Left cardiac atrium (tissue), 4 donors: ENCODE measurements at regions of chr6 and their contacts with region 1.

Region 1: DNA sequence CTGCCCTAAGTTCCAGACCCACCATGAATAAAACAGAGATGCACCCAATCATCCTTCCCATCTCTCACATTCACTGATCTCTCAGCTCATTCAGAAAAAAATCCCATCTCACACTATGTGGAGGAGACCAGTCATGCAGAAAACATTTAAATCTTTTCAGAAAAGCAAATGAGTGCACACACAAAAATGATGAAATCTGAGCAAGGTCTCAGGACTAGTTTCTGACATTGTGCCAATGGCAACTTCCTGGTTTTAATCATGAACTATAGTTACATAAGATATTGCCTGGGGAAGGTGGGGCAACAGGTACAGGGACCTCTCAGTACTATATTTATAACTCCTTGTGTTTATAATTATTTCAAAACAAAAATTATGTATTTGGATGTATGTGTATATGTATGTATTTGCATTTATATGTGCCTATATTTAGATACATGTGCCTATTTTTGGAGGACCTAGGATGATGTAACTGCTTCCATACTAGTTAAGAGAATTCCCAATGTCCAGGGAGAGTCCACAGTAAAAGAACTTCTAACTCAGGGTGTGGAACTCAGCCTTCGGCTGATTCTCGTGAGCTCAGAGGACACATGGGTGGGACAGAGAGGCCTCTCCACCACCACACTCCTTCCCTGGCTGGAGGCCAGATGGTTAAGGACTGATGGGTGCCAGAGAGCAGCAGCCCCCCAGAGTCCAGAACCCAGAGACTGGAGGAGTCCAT is 71.7 kb upstream of the MAP3K4 start:
- DNase-seq: no peak
- ATAC-seq: peak in 1 of 2 donors; percentile 44

Region 2: DNA sequence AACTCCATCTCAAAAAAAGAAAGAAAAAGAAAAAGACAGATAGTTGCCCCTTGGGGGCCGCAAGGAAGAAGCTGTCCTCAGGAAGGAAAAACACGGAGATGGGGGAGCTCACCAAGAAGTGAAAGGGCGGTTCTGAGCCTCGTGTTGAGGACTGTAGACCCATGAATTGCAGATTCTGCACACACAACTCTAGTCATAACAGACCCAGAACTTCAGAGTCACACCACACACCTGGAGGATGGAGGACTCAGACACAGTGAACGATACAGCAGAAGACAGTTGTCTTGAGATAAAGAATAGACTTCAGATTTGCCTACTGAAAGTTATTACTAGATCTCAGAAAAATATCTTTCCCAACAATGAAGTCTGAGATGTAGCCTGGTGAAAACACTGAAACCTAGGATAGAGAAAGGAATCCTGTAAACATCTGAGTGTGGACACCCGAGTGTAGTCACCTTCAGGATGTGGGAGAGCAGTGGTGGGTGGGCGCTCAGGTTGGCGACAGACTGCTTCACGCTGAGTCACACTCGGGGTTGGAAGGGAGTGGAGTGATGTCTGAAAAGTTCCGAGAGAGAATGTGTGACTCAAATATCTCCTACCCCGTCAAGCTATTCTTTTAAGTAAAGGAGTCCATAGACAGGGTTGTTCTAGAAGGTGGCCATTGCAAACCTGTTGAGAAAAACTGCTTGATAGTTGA is 159.8 kb after region 1 on chr6:
- intact Hi-C with region 1: loop called in 1 of 2 experiments (anchors 10 kb)
- DNase-seq: peak; percentile 33
- ATAC-seq: peak in 1 of 2 donors; percentile 79

Region 3: DNA sequence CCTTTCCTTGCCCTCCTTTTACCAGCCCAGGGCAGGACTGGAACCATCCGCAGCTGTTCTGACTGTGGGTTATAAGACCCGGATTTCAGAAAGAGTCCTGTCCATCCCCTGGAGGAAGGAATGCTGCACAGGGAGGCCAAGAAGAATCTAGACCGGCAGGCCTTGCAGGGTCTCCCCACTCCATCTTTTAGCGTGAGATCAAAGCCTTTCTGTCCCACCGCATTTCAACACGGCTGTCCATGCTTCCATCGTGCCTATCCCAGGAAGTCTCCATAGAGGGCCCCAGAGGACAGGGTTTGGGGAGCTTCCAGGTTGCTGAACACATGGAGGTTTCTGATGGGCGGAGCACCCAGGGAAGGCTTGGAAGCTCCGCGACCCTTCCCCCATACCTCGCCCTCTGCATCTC is 433.3 kb after region 1 on chr6:
- intact Hi-C with region 1: no loop called
- DNase-seq: no peak
- ATAC-seq: peak; percentile 53 to 71